ENCODE measurements at regions of chr17 and their contacts with region 1.

Region 1: GRCh38 chr17:27353461-27354050 is 59.6 kb downstream of the WSB1 start:
- DNase-seq: peak; percentile 74 to 96
- H3K4me3 ChIP-seq: peak overlapping the region; percentile 63 to 73
- H3K27ac ChIP-seq: peak overlapping the region; percentile 95 to 98
- H3K4me1 ChIP-seq: peaks cover 3 to 11% of the 10 kb centered on the region in 2 donors
- H3K27me3 ChIP-seq: no peaks in the 10 kb centered on the region
- CTCF ChIP-seq: peak; percentile 36 to 100 (median 72)

Region 2: GRCh38 chr17:27293898-27294688 is 59.5 kb before region 1 on chr17 and contains the start of gene WSB1:
- intact Hi-C with region 1: loop called (anchors 2 kb)
- DNase-seq: peak; percentile 78 to 96
- H3K4me3 ChIP-seq: peak within 1 kb of the TSS; percentile 72 to 76
- H3K27ac ChIP-seq: peak within 1 kb of the TSS; percentile 98 to 99
- H3K4me1 ChIP-seq: peaks cover 13 to 28% of the 10 kb centered on the region in 2 donors
- H3K27me3 ChIP-seq: no peaks in the 10 kb centered on the region
- CTCF ChIP-seq: no peak
- total RNA-seq, gene WSB1: 176 TPM

Region 3: GRCh38 chr17:27339836-27340550 is 13.6 kb before region 1 on chr17:
- intact Hi-C with region 1: no loop called
- DNase-seq: no peak
- H3K4me3 ChIP-seq: no peak overlapping the region
- H3K27ac ChIP-seq: no peak overlapping the region
- H3K4me1 ChIP-seq: no peaks in the 10 kb centered on the region
- H3K27me3 ChIP-seq: no peaks in the 10 kb centered on the region
- CTCF ChIP-seq: no peak

Region 4: DNA sequence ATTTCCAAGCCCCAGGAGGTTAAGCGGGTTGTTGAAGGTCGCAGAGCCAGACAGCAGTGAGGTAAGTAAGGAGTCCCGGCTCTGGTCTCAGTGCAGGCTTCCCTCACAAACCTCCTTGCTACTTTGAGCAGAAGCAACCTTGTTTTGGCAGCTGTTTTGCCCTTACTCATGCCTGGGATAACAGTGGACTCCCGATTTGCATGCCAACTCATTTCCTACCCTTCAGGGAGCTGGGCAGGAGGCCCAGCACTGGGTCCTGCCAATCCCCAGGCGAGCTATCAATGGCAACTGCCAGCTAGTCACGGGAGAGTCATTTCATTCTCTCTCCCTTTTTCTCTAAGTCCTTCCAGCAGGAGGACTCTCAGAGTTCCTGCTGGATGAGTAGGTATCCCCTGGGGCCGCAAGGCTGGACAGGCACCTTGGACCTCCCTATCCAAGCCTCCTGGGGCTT is 30.7 kb after region 1 on chr17:
- intact Hi-C with region 1: loop called (anchors 1 kb)
- DNase-seq: peak; percentile 60 to 92
- H3K4me3 ChIP-seq: no peak overlapping the region
- H3K27ac ChIP-seq: peak overlapping the region; percentile 62 to 72
- H3K4me1 ChIP-seq: peaks cover 6 to 26% of the 10 kb centered on the region in 2 donors
- H3K27me3 ChIP-seq: no peaks in the 10 kb centered on the region
- CTCF ChIP-seq: peak in 1 of 3 experiments; percentile 11

Region 5: DNA sequence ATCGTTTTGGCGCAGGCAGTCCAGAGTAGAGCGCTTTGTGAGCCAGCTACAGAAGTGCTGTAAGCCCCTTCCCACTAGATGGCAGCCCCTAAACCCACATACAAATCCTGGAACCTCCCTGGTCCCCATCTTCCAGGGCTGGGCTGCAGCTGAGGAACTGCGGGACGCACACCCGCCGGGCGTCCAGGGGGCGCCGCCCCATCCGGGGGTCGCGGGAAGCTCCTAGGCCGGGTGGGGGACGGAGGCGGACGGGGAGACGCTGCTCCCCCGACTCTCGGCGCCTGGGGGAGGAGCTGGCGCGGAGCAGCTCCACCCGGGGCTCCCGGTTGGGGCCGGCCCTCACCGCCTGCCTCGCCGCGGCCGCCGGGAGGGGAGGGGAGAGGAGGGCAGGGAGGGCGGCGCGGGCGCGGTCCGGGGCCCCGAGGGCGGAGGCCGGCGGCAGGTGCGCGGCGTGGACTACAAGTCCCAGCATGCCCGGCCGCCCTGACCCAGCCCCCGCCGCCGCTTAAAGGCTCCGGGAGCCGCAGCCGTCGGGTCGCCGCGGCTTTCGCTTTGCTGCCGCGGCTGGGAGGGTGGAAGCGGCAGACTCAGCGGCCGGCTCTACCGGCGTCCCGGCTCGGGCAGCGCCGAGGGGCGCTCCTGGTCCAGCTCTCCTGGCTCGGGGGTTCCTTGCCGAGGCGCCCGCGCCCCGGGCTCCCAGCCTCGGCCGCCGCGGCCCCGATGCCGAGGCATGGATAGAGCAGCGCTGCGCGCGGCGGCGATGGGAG is 102.5 kb after region 1 on chr17 and contains the start of gene KSR1:
- intact Hi-C with region 1: loop called (anchors 1 kb)
- DNase-seq: peak; percentile 49 to 87
- H3K4me3 ChIP-seq: peak within 1 kb of the TSS; percentile 93
- H3K27ac ChIP-seq: peak within 1 kb of the TSS; percentile 90 to 91
- H3K4me1 ChIP-seq: peaks cover 0 to 12% of the 10 kb centered on the region in 2 donors
- H3K27me3 ChIP-seq: no peaks in the 10 kb centered on the region
- CTCF ChIP-seq: peak; percentile 14 to 36 (median 25)
- total RNA-seq, gene KSR1: 42.6 TPM

Measured in ascending aorta (tissue), 2 donors.